Posterior cingulate gyrus (tissue), 11 donors: ENCODE measurements at regions of chr17 and their contacts with region 1.

Region 1: GRCh38 chr17:82030470-82031302 is 792 bp upstream of the RAC3 start:
- DNase-seq: peak; percentile 80 to 98 (median 86)

Region 2: DNA sequence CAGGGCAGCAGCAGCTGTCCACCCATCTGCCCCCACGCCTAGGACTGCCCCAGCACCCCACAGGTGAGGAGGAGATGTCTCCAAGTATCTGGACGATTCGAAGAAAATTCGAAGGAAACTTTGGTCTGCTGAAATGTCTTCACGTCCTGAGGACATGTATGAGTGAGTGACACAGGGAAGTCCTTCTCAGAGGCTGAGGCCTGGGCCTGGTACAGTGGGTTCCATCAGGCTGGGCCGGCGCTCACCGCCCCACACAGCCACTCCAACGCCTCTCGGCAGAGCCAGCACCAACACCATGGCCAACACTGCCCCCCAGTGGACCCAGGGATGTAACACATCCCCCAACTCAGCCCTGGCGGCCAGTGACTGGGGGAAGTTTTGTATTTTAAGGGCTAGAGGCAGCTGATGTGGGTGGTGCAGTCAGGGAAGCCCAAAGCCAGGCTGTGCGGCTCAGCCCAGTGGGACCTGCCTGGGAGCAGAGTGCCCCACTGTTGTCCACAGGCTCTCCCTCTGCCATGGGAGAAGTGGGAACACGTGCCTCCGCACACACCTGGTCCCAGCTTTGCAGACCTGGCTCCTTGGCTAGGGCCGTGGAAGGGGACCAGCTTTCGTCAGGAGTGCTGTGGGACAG is 123.2 kb after region 1 on chr17:
- intact Hi-C with region 1: loop called (anchors 1 kb)
- DNase-seq: peak; percentile 51 to 97 (median 78)